Thyroid gland (tissue), 4 donors: ENCODE measurements at regions of chr1 and their contacts with region 1.

Region 1: DNA sequence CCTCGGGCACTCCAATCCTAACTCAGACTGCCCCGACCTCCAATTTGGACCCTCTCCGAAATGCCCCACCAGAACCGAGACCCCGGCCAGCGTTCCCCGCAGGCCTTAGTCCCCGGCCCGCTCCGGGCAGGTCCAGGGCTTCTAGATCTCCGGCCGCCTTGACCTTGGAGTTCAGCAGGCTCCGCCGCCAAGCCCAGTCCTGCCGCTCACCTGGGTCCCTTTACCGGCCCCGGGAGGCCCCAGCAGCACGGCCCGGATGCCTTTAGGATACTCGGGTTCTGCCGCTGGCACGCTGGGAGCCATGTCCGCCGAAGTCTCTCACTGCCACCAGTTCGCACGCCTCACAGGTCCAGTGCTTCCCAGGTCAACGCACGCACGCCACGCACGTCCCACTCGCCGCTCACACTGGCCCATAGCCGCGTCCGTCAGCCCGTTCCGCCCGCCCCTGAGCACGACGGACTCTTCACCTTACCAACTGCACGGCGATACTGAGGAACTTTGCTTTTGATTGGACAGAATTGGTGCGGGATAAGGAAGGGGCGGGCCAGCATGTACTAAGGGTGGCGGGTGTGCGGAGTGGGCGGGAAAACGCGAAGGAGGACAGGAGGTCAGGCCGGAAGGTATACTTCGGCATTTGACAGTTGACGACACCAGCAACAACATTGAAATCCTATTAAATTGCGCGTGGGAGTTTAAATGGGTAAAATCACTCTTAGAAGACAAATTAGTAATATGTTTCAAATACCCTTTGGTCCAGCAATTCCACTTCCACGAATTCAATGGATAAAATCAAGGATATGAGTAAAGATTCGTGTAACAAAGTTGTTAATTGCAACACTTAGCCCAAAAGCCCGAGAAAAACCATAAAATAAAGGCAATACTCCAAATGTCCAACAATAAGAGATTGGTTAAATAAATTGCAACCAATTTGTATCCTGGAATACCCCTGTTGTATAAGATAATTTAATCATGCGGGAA is at the start of gene AK2:
- DNase-seq: peak; percentile 97 to 98
- H3K4me3 ChIP-seq: peak within 1 kb of the TSS; percentile 9 to 89 (median 47)
- H3K27ac ChIP-seq: peak within 1 kb of the TSS; percentile 1 to 86 (median 72)
- H3K4me1 ChIP-seq: peaks cover 31 to 37% of the 10 kb centered on the region in 2 donors
- H3K27me3 ChIP-seq: no peaks in the 10 kb centered on the region
- CTCF ChIP-seq: no peak
- POLR2A ChIP-seq: peak in 1 of 2 donors; percentile 86
- total RNA-seq, gene AK2: 214 to 308 (median 256) TPM

Region 2: GRCh38 chr1:32964461-32965250 is 72.2 kb before region 1 on chr1 and contains the start of gene RNF19B:
- intact Hi-C with region 1: loop called (anchors 5 kb)
- DNase-seq: peak; percentile 96
- H3K4me3 ChIP-seq: peak within 1 kb of the TSS; percentile 51 to 92 (median 71)
- H3K27ac ChIP-seq: peak within 1 kb of the TSS; percentile 63 to 88 (median 72)
- H3K4me1 ChIP-seq: peaks cover 22 to 29% of the 10 kb centered on the region in 2 donors
- H3K27me3 ChIP-seq: no peaks in the 10 kb centered on the region
- CTCF ChIP-seq: peak in 1 of 6 experiments; percentile 27
- POLR2A ChIP-seq: peak; percentile 98 to 100
- total RNA-seq, gene RNF19B: 13.6 to 24.6 (median 22.4) TPM